Sigmoid colon (tissue), 7 donors: ENCODE measurements at regions of chr5 and their contacts with region 1.

Region 1: GRCh38 chr5:68027519-68027918 is 188.0 kb upstream of the PIK3R1 start:
- DNase-seq: peak; percentile 85
- H3K4me3 ChIP-seq: no peak overlapping the region
- H3K27ac ChIP-seq: peak overlapping the region; percentile 75 to 86 (median 80)
- H3K4me1 ChIP-seq: peaks cover 3 to 51% (median 42%) of the 10 kb centered on the region in 4 donors
- H3K27me3 ChIP-seq: no peaks in the 10 kb centered on the region
- CTCF ChIP-seq: no peak
- EP300 ChIP-seq: peak; percentile 98 to 99 (median 98)
- POLR2A ChIP-seq: no peak

Region 2: DNA sequence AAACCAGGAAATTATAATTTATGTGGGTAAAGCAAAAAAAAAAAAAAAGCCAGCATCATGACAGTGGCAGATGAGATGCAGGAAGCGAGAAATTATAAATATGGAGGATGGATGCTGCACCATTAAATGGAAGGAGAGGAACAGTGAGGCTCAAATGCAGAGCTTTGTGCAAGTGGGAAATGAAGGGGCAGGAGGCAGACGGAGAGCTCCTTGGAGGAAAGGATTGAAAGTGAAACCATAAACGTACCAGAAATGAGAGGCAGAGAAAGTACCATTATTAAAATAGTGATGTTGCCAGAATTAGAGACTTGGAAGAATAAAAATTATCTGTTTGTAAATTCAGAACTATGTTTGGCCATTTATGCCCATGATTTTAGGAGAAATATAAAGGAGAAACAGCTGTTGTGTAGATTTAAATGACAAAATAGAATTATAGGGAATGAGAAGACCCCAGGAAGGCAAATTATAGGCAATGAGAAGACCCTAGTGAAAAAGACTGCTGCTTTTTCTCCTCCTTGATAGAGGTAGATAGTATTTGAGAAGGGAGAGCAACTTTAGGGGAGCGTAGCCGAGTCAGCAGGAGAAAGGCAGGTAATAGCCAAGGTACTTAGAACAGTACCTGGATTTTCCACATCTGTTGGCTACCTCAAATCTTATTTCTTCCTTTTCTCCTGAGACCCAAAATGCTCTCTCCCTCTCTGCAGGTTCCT is 489.9 kb before region 1 on chr5:
- intact Hi-C with region 1: loop called (anchors 5 kb)
- DNase-seq: no peak
- H3K4me3 ChIP-seq: peak overlapping the region in 3 of 4 donors; percentile 20 to 31 (median 27)
- H3K27ac ChIP-seq: peak overlapping the region; percentile 73 to 85 (median 84)
- H3K4me1 ChIP-seq: peaks cover 0 to 32% (median 29%) of the 10 kb centered on the region in 4 donors
- H3K27me3 ChIP-seq: no peaks in the 10 kb centered on the region
- CTCF ChIP-seq: no peak
- EP300 ChIP-seq: no peak
- POLR2A ChIP-seq: no peak

Region 3: GRCh38 chr5:67693956-67694809 is 333.3 kb before region 1 on chr5:
- intact Hi-C with region 1: loop called (anchors 2 kb)
- DNase-seq: peak; percentile 97
- H3K4me3 ChIP-seq: no peak overlapping the region
- H3K27ac ChIP-seq: peak overlapping the region; percentile 83 to 89 (median 86)
- H3K4me1 ChIP-seq: peaks cover 0 to 37% (median 29%) of the 10 kb centered on the region in 4 donors
- H3K27me3 ChIP-seq: no peaks in the 10 kb centered on the region
- CTCF ChIP-seq: no peak
- EP300 ChIP-seq: peak; percentile 90 to 100 (median 98)
- POLR2A ChIP-seq: no peak

Region 4: DNA sequence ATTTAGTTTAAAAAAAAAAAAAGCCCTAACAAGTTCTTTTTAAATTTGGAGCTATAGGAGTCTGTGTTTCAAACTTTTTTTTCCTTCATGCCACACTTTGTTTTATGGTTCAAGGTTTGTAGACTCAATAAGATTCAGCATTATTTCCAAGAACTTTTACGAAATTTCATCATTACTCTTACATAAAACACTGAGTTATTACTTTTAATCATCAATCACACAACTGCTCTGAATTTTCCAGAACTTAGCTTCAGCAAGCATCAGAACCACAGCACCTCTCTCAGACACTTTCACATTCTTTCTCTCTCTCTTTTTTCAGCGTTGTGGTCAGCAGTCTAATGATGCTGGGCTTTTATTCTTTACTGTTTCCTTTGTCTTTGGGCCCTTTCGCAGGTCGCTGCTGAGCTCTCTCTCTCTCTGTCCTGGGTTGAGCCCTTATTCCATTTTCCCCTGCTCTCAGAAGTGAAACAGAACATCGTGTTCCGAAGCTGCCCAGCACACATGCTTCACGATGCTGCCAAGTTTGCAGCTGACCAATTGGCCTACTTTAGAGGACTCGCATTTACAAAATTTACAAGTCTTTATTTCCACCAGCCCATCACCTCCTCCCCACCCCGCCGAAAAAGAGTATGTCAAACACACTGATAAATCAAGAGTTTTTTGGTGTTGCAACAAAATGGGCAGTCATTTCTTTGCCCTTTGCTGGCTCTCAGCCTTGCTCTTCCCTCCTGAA is 143.5 kb after region 1 on chr5:
- intact Hi-C with region 1: loop called (anchors 2 kb)
- DNase-seq: peak; percentile 98
- H3K4me3 ChIP-seq: peak overlapping the region in 1 of 4 donors; percentile 14
- H3K27ac ChIP-seq: peak overlapping the region; percentile 77 to 89 (median 87)
- H3K4me1 ChIP-seq: peaks cover 0 to 37% (median 36%) of the 10 kb centered on the region in 4 donors
- H3K27me3 ChIP-seq: no peaks in the 10 kb centered on the region
- CTCF ChIP-seq: no peak
- EP300 ChIP-seq: peak; percentile 98 to 99 (median 98)
- POLR2A ChIP-seq: no peak

Region 5: GRCh38 chr5:68187268-68188055 is 159.9 kb after region 1 on chr5:
- intact Hi-C with region 1: no loop called
- DNase-seq: peak; percentile 85
- H3K4me3 ChIP-seq: peak overlapping the region; percentile 5 to 39 (median 38)
- H3K27ac ChIP-seq: peak overlapping the region; percentile 75 to 84 (median 82)
- H3K4me1 ChIP-seq: peaks cover 0 to 15% (median 14%) of the 10 kb centered on the region in 4 donors
- H3K27me3 ChIP-seq: no peaks in the 10 kb centered on the region
- CTCF ChIP-seq: no peak
- EP300 ChIP-seq: no peak
- POLR2A ChIP-seq: no peak

Region 6: DNA sequence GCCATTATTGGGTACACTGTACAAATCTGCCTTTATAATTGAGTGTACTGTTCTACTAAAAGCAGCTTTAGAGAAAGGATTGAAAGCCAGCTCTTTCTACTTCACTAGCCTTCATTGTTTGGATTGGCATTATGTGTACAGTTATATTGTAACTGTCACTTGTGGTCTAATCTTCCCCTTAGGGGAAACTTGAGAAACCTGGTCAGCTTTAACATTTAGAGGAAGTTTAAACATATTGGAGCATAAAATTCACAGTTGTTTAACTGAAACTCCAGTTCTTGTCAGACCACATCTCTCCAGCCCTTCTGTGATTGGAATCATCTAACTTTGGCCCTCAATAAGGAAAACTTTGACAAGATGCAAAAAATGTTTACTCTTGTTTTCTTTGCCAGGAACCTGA is 212.7 kb after region 1 on chr5:
- intact Hi-C with region 1: loop called (anchors 10 kb)
- DNase-seq: no peak
- H3K4me3 ChIP-seq: peak overlapping the region in 2 of 4 donors; percentile 1 to 14
- H3K27ac ChIP-seq: peak overlapping the region; percentile 55 to 74 (median 65)
- H3K4me1 ChIP-seq: peaks cover 0 to 97% (median 85%) of the 10 kb centered on the region in 4 donors
- H3K27me3 ChIP-seq: no peaks in the 10 kb centered on the region
- CTCF ChIP-seq: no peak
- EP300 ChIP-seq: no peak
- POLR2A ChIP-seq: no peak

Region 7: GRCh38 chr5:68770551-68770950 is 743.0 kb after region 1 on chr5:
- intact Hi-C with region 1: no loop called
- DNase-seq: no peak
- H3K4me3 ChIP-seq: no peak overlapping the region
- H3K27ac ChIP-seq: no peak overlapping the region
- H3K4me1 ChIP-seq: no peaks in the 10 kb centered on the region
- H3K27me3 ChIP-seq: no peaks in the 10 kb centered on the region
- CTCF ChIP-seq: no peak
- EP300 ChIP-seq: no peak
- POLR2A ChIP-seq: no peak